Activated CD4-positive, alpha-beta memory T cell treated with anti-CD3 and anti-CD28 coated beads for 36 hours (primary cell): ENCODE measurements at regions of chr2 and their contacts with region 1.

Region 1: GRCh38 chr2:201231781-201232466 is 28.4 kb upstream of the CASP8 start:
- DNase-seq: peak; percentile 94
- H3K4me3 Mint-ChIP-seq: peak overlapping the region; percentile 49
- H3K27ac Mint-ChIP-seq: peak overlapping the region; percentile 98
- H3K4me1 Mint-ChIP-seq: peaks cover 42% of the 10 kb centered on the region
- H3K27me3 Mint-ChIP-seq: no peaks in the 10 kb centered on the region

Region 2: DNA sequence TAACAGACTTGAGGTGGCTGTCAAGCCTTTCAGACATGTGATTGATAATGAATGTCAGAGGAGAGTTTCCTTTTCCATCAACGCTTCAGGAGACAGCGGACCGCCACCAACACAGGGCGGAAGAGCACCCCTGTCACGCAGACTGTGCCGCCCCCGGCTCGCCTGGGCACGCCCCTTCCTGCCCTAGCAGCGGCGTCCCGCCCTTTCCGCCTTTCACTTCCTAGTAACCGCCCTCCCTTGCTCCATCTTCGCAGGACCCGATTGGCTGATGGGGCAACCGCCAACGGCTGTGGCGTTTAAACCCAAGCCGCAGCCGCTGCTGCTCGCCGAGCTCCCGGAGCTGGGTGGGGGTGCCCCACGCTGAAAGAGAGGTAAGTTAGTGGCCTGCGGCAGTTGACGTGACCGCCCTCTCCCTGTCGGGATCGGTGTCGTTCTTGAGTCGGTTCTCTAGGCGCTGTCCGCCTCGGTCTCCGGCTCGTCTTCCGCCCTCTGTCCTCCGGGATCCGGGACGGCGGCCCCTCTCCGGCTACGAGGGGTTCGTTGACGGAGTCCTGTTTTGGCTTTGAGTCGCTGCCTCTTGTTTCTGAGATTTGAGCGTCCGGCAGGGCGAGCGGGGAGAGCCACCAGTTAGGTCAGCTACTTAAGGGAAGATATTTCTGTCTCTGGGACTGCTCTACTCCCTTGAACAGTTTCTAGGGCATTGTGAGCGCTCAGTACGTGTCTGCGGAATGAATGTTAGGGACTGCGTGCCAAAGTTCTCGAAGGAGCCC is 705.9 kb before region 1 on chr2 and contains the start of gene SGO2:
- CTCF ChIA-PET with region 1: no interaction called
- POLR2A ChIA-PET with region 1: no interaction called
- intact Hi-C with region 1: loop called (anchors 2 kb)
- DNase-seq: peak; percentile 98
- H3K4me3 Mint-ChIP-seq: peak within 1 kb of the TSS; percentile 88
- H3K27ac Mint-ChIP-seq: peak within 1 kb of the TSS; percentile 73
- H3K4me1 Mint-ChIP-seq: peaks cover 20% of the 10 kb centered on the region
- H3K27me3 Mint-ChIP-seq: no peaks in the 10 kb centered on the region
- total RNA-seq, gene SGO2: 40.5 to 40.7 TPM

Region 3: GRCh38 chr2:200670313-200670712 is 561.6 kb before region 1 on chr2:
- CTCF ChIA-PET with region 1: no interaction called
- POLR2A ChIA-PET with region 1: no interaction called
- intact Hi-C with region 1: no loop called
- DNase-seq: no peak
- H3K4me3 Mint-ChIP-seq: no peak overlapping the region
- H3K27ac Mint-ChIP-seq: no peak overlapping the region
- H3K4me1 Mint-ChIP-seq: peaks cover 7% of the 10 kb centered on the region
- H3K27me3 Mint-ChIP-seq: peaks cover 5% of the 10 kb centered on the region

Region 4: DNA sequence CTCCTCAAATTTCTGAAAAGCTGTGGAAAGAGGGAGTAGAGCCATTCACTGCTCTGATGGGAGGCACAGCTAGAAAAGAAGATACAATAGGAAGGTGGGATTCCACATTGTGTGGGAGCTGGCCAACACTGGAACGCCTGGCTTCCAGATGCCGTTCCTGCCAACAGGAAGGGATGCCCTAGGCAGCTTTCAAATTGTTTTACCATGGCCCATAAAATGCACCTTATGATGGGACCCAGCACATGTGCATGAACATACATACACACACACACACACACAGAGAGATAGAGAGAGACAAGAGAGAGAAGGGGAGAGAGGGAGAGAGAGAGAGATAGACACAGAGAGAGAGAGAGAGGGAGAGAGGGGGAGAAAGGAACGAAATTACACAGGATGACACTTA is 506.3 kb before region 1 on chr2:
- CTCF ChIA-PET with region 1: no interaction called
- POLR2A ChIA-PET with region 1: no interaction called
- intact Hi-C with region 1: no loop called
- DNase-seq: no peak
- H3K4me3 Mint-ChIP-seq: no peak overlapping the region
- H3K27ac Mint-ChIP-seq: no peak overlapping the region
- H3K4me1 Mint-ChIP-seq: peaks cover 3% of the 10 kb centered on the region
- H3K27me3 Mint-ChIP-seq: peaks cover 3% of the 10 kb centered on the region

Region 5: DNA sequence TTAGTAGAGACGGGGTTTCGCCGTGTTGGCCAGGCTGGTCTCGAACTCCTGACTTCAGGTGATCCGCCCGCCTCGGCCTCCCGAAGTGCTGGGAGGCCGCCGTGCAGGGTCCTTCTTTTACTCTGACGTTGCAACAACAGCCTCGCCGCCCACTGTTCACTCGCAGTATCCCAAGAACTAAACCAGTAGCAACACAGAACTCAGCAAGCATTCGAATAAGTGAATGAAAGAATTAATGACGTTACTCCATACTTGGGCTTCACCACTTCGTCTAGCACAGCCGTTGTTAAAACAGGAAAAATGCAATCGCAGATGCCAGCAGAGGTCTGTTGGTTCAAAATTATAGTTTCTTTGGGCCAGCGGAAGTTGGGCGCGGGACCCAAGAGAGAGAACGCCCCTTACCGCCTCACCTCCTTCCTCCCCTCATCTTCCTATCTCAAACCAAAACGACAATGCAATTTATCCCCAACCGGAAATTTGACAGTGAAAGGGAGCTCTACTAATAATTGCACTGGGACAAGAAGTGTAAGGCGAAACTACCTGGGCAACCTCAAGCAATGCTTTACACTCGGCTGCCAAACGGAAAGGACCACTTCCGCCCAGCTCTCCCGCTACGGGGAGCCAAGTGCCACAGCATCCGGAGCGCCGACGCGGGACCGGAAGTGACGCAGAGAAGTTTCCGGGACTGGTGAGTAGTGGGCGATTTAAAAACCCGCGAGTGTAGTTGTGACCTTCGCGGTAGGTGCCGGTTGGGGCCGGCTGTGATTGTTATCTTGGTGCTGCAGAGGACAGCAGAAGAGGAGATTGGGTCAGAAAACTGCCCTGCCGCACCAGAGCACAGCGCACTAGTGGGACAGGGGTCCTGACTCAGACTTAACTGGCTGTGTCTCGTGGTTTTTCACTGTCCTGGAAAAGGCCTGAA is 343.0 kb before region 1 on chr2 and contains the starts of genes NIF3L1 and PPIL3:
- CTCF ChIA-PET with region 1: interaction called, 14 read pairs
- POLR2A ChIA-PET with region 1: interaction called, 23 read pairs
- intact Hi-C with region 1: loop called (anchors 1 kb)
- DNase-seq: peak; percentile 99
- H3K4me3 Mint-ChIP-seq: peak within 1 kb of the TSS; percentile 98
- H3K27ac Mint-ChIP-seq: peak within 1 kb of the TSS; percentile 100
- H3K4me1 Mint-ChIP-seq: peaks cover 44% of the 10 kb centered on the region
- H3K27me3 Mint-ChIP-seq: no peaks in the 10 kb centered on the region
- total RNA-seq, gene NIF3L1: 30.8 to 32.7 TPM
- total RNA-seq, gene PPIL3: 84.0 to 87.9 TPM

Region 6: GRCh38 chr2:201118121-201118960 is 113.6 kb before region 1 on chr2:
- CTCF ChIA-PET with region 1: interaction called, 20 read pairs
- POLR2A ChIA-PET with region 1: interaction called, 12 read pairs
- intact Hi-C with region 1: loop called (anchors 1 kb)
- DNase-seq: peak; percentile 93
- H3K4me3 Mint-ChIP-seq: peak overlapping the region; percentile 99
- H3K27ac Mint-ChIP-seq: peak overlapping the region; percentile 97
- H3K4me1 Mint-ChIP-seq: peaks cover 37% of the 10 kb centered on the region
- H3K27me3 Mint-ChIP-seq: no peaks in the 10 kb centered on the region

Region 7: GRCh38 chr2:201182650-201183364 is 49.1 kb before region 1 on chr2 and contains the start of gene CASP10:
- CTCF ChIA-PET with region 1: interaction called, 215 read pairs
- POLR2A ChIA-PET with region 1: interaction called, 47 read pairs
- intact Hi-C with region 1: loop called (anchors 1 kb)
- DNase-seq: no peak
- H3K4me3 Mint-ChIP-seq: peak within 1 kb of the TSS; percentile 85
- H3K27ac Mint-ChIP-seq: peak within 1 kb of the TSS; percentile 90
- H3K4me1 Mint-ChIP-seq: peaks cover 58% of the 10 kb centered on the region
- H3K27me3 Mint-ChIP-seq: no peaks in the 10 kb centered on the region
- total RNA-seq, gene CASP10: 15.9 to 16.7 TPM

Region 8: DNA sequence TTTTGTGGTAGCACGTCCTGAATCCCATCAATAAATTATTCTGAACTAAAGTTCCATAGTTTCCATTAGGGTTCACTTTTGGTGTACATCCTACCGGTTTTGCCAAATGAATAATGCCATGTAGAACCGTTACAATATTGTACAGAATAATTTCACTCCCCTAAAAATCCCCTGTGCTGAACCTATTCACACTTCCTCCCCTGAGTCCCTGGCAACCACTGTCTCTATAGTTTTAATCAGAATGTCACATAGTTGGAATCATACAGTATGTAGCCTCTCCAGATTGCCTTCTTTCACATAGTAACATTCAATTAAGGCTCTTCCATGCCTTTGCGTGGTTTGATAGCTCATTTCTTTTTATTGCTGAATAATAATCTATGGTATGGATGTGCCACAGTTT is 18.8 kb after region 1 on chr2:
- CTCF ChIA-PET with region 1: interaction called, 30 read pairs
- POLR2A ChIA-PET with region 1: interaction called, 13 read pairs
- intact Hi-C with region 1: no loop called
- DNase-seq: no peak
- H3K4me3 Mint-ChIP-seq: no peak overlapping the region
- H3K27ac Mint-ChIP-seq: no peak overlapping the region
- H3K4me1 Mint-ChIP-seq: peaks cover 69% of the 10 kb centered on the region
- H3K27me3 Mint-ChIP-seq: no peaks in the 10 kb centered on the region

Region 9: DNA sequence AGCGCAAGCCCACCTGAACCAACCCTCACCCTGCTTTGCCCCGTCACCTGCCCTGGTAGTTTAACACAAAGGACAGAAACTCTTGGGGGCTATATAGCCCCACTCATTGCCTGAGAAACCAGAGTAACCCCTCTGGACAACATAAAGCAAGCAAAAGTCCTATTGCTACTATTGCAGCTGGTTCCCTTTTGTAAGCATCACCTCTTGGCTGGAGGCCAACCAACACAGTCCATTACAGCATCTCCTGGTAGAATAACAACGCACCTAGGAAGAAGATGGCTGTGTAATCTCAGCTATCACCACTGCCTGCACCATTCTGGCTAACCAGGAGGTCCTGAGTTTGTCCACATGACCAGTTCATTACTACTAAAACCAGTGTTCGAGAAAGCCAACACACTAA is 88.8 kb after region 1 on chr2:
- CTCF ChIA-PET with region 1: no interaction called
- POLR2A ChIA-PET with region 1: no interaction called
- intact Hi-C with region 1: no loop called
- DNase-seq: no peak
- H3K4me3 Mint-ChIP-seq: no peak overlapping the region
- H3K27ac Mint-ChIP-seq: no peak overlapping the region
- H3K4me1 Mint-ChIP-seq: no peaks in the 10 kb centered on the region
- H3K27me3 Mint-ChIP-seq: no peaks in the 10 kb centered on the region

Region 10: GRCh38 chr2:201363857-201364560 is 132.1 kb after region 1 on chr2:
- CTCF ChIA-PET with region 1: interaction called, 50 read pairs
- POLR2A ChIA-PET with region 1: no interaction called
- intact Hi-C with region 1: loop called (anchors 1 kb)
- DNase-seq: peak; percentile 32
- H3K4me3 Mint-ChIP-seq: no peak overlapping the region
- H3K27ac Mint-ChIP-seq: no peak overlapping the region
- H3K4me1 Mint-ChIP-seq: peaks cover 24% of the 10 kb centered on the region
- H3K27me3 Mint-ChIP-seq: no peaks in the 10 kb centered on the region

Region 11: GRCh38 chr2:201500534-201500933 is 268.6 kb after region 1 on chr2:
- CTCF ChIA-PET with region 1: no interaction called
- POLR2A ChIA-PET with region 1: no interaction called
- intact Hi-C with region 1: no loop called
- DNase-seq: no peak
- H3K4me3 Mint-ChIP-seq: no peak overlapping the region
- H3K27ac Mint-ChIP-seq: no peak overlapping the region
- H3K4me1 Mint-ChIP-seq: no peaks in the 10 kb centered on the region
- H3K27me3 Mint-ChIP-seq: peaks cover 1% of the 10 kb centered on the region